Sigmoid colon (tissue), 7 donors: ENCODE measurements at regions of chr15 and their contacts with region 1.

Region 1: DNA sequence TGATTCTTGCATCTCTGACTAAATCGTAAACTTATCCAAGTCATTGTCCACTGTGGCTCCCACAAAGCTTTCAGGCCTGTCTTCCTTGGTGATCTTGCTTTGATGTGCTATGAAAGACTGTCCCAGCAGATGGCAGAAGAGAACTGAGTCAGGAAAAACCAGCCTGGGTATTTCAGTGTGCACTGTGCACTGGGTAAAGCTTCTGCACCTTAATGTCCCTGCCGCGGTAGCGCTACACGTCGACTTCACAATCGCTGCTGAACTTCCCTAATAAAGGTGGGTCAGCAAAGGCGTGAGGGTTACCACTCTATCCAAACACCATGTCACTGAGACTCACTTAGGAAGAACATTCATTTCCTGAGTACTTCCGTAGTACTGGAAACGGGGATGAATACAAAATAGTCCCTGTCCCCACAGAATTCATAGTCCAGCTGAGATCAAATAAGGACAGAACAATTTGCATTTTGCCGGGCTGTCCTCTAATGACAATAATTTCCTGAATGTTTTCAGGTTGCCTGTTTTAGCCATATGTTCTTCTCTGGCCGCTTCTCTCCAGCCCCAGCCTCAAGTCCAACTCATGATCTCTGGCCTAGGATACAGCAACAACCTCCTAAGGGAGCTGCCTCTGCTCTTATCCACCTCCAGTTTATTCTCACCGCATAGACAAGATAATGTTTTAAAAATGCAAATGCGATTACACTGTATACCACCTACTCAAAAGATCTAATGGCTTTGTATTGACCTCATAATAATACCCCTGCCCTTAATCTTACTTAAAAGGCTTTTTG is 83.6 kb upstream of the AKAP13 start:
- DNase-seq: peak; percentile 81
- H3K4me3 ChIP-seq: peak overlapping the region in 2 of 4 donors; percentile 24 to 32
- H3K27ac ChIP-seq: peak overlapping the region in 2 of 4 donors; percentile 11 to 45
- H3K4me1 ChIP-seq: peaks cover 0 to 11% (median 6%) of the 10 kb centered on the region in 4 donors
- H3K27me3 ChIP-seq: peaks cover 0 to 4% (median 0%) of the 10 kb centered on the region in 3 donors
- CTCF ChIP-seq: peak; percentile 50 to 71 (median 70)
- EP300 ChIP-seq: no peak
- POLR2A ChIP-seq: no peak

Region 2: DNA sequence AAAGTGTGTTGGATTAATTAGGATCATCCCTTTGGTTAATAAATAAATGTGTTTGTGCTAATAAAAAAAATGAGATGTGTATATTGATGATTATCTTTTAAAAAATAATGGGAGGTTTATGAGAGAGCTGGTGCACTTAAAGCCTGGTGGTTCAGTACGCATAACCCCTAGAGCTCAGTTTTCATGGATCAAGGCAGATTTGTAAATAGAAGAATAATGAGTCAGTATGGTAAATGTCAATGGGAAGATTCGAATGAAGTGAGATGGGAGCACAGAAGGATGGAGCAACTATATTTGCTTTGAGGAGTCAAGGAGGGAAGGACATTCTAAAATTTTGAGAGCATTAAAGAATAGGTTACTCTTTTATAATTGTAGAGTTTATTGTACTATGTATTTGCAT is 119.0 kb after region 1 on chr15:
- intact Hi-C with region 1: loop called (anchors 2 kb)
- DNase-seq: no peak
- H3K4me3 ChIP-seq: no peak overlapping the region
- H3K27ac ChIP-seq: no peak overlapping the region
- H3K4me1 ChIP-seq: peaks cover 0 to 43% (median 25%) of the 10 kb centered on the region in 4 donors
- H3K27me3 ChIP-seq: no peaks in the 10 kb centered on the region
- CTCF ChIP-seq: no peak
- EP300 ChIP-seq: no peak
- POLR2A ChIP-seq: no peak